Dendritic cell treated with granulocyte-macrophage colony-stimulating factor and Interleukin-4, amounts not matched to agents 40 ng/mL and 50 ng/mL, for 4 days (primary cell): ENCODE measurements at regions of chr9 and their contacts with region 1.

Region 1: GRCh38 chr9:79201636-79202035 is 370.1 kb upstream of the TLE4 start:
- H3K4me3 Mint-ChIP-seq: no peak overlapping the region
- H3K27ac Mint-ChIP-seq: no peak overlapping the region
- H3K4me1 Mint-ChIP-seq: no peaks in the 10 kb centered on the region
- H3K27me3 Mint-ChIP-seq: no peaks in the 10 kb centered on the region

Region 2: GRCh38 chr9:79256691-79257213 is 55.1 kb after region 1 on chr9:
- intact Hi-C with region 1: loop called (anchors 10 kb)
- H3K4me3 Mint-ChIP-seq: no peak overlapping the region
- H3K27ac Mint-ChIP-seq: no peak overlapping the region
- H3K4me1 Mint-ChIP-seq: peaks cover 23% of the 10 kb centered on the region
- H3K27me3 Mint-ChIP-seq: no peaks in the 10 kb centered on the region